Heart left ventricle (tissue), 16 donors: ENCODE measurements at regions of chr15 and their contacts with region 1.

Region 1: GRCh38 chr15:84600851-84601838 is at the start of gene ZSCAN2:
- DNase-seq: peak; percentile 95 to 97 (median 96)
- ATAC-seq: peak; percentile 98 to 99 (median 99)
- H3K4me3 ChIP-seq: peak within 1 kb of the TSS; percentile 47 to 97 (median 90)
- H3K27ac ChIP-seq: peak within 1 kb of the TSS in 11 of 12 donors; percentile 45 to 83 (median 72)
- H3K4me1 ChIP-seq: peaks cover 0 to 46% (median 9%) of the 10 kb centered on the region in 12 donors
- H3K27me3 ChIP-seq: no peaks in the 10 kb centered on the region
- CTCF ChIP-seq: no peak
- POLR2A ChIP-seq: peak in 1 of 2 donors; percentile 56
- total RNA-seq, gene ZSCAN2: 4.6 to 10.6 (median 6.3) TPM

Region 2: GRCh38 chr15:84633311-84634227 is 32.4 kb after region 1 on chr15:
- intact Hi-C with region 1: loop called in 6 of 10 experiments (anchors 1 to 5 kb)
- DNase-seq: peak; percentile 69 to 90 (median 80)
- ATAC-seq: peak; percentile 22 to 81 (median 61)
- H3K4me3 ChIP-seq: peak overlapping the region; percentile 53 to 85 (median 77)
- H3K27ac ChIP-seq: peak overlapping the region; percentile 91 to 99 (median 98)
- H3K4me1 ChIP-seq: peaks cover 3 to 54% (median 33%) of the 10 kb centered on the region in 12 donors
- H3K27me3 ChIP-seq: no peaks in the 10 kb centered on the region
- CTCF ChIP-seq: peak in 1 of 12 donors; percentile 9
- POLR2A ChIP-seq: peak in 1 of 2 donors; percentile 43

Region 3: DNA sequence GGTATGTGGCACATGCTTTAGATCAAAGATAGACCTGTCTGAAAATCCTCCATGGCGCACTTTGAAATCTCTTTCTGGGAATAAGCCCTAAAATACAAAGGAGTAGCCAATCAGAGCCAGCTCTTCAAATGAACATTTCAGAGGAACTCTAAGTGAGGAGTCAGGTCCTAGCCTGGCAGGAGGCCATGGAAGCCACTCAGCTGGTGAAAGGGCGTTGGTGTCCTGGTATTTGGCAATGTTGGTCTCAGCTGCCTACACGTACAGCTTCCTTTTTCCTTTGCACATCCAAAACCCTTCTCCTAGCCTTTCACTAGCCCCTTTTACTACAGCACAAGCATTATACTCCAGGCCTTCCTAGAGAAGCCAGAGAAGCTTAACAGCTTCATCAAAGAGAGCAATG is 47.4 kb after region 1 on chr15:
- intact Hi-C with region 1: loop called in 3 of 10 experiments (anchors 5 kb)
- DNase-seq: peak in 4 of 5 donors; percentile 33 to 80 (median 71)
- ATAC-seq: peak in 3 of 4 donors; percentile 48 to 56 (median 54)
- H3K4me3 ChIP-seq: no peak overlapping the region
- H3K27ac ChIP-seq: peak overlapping the region in 7 of 12 donors; percentile 5 to 53 (median 20)
- H3K4me1 ChIP-seq: peaks cover 0 to 47% (median 33%) of the 10 kb centered on the region in 12 donors
- H3K27me3 ChIP-seq: no peaks in the 10 kb centered on the region
- CTCF ChIP-seq: no peak
- POLR2A ChIP-seq: no peak

Region 4: GRCh38 chr15:84716036-84716799 is 115.1 kb after region 1 on chr15 and contains the start of gene SEC11A:
- intact Hi-C with region 1: loop called in 1 of 10 experiments (anchors 1 kb)
- DNase-seq: peak; percentile 95 to 98 (median 96)
- ATAC-seq: peak; percentile 98 to 99 (median 98)
- H3K4me3 ChIP-seq: peak within 1 kb of the TSS; percentile 58 to 98 (median 82)
- H3K27ac ChIP-seq: peak within 1 kb of the TSS; percentile 86 to 99 (median 94)
- H3K4me1 ChIP-seq: peaks cover 8 to 52% (median 25%) of the 10 kb centered on the region in 12 donors
- H3K27me3 ChIP-seq: no peaks in the 10 kb centered on the region
- CTCF ChIP-seq: no peak
- POLR2A ChIP-seq: peak in 1 of 2 donors; percentile 76
- total RNA-seq, gene SEC11A: 55.7 to 95.7 (median 73.0) TPM

Region 5: DNA sequence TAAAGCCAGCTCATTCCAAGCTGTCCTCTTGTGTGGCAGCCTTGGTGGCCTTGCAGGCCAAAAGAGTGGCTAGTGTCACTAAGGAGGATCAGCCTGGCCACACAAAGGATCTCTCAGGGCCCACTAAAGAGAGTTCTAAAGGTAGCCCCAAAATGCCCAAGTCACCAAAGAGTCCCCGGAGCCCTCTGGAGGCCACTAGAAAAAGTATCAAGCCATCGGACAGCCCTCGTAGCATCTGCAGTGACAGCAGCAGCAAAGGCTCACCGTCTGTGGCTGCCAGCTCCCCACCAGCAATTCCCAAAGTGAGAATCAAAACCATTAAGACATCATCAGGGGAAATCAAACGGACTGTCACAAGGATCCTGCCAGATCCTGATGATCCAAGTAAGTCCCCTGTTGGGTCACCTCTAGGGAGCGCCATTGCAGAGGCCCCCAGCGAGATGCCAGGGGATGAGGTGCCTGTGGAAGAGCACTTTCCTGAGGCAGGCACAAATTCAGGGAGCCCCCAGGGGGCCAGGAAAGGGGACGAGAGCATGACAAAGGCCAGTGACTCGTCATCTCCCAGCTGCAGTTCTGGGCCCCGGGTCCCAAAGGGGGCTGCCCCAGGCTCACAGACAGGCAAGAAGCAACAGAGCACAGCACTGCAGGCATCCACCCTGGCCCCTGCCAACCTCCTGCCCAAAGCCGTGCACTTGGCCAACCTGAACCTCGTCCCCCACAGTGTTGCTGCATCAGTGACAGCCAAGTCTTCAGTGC is 182.5 kb after region 1 on chr15:
- intact Hi-C with region 1: loop called in 1 of 10 experiments (anchors 10 kb)
- DNase-seq: no peak
- ATAC-seq: no peak
- H3K4me3 ChIP-seq: no peak overlapping the region
- H3K27ac ChIP-seq: no peak overlapping the region
- H3K4me1 ChIP-seq: peaks cover 3 to 55% (median 35%) of the 10 kb centered on the region in 12 donors
- H3K27me3 ChIP-seq: no peaks in the 10 kb centered on the region
- CTCF ChIP-seq: no peak
- POLR2A ChIP-seq: no peak

Region 6: GRCh38 chr15:84818261-84819131 is 217.4 kb after region 1 on chr15:
- intact Hi-C with region 1: loop called in 2 of 10 experiments (anchors 5 to 10 kb)
- DNase-seq: peak in 4 of 5 donors; percentile 62 to 77 (median 66)
- ATAC-seq: peak; percentile 3 to 46 (median 24)
- H3K4me3 ChIP-seq: peak overlapping the region; percentile 35 to 93 (median 72)
- H3K27ac ChIP-seq: peak overlapping the region; percentile 93 to 99 (median 96)
- H3K4me1 ChIP-seq: peaks cover 11 to 78% (median 68%) of the 10 kb centered on the region in 12 donors
- H3K27me3 ChIP-seq: no peaks in the 10 kb centered on the region
- CTCF ChIP-seq: peak in 3 of 12 donors; percentile 28 to 35 (median 29)
- POLR2A ChIP-seq: no peak

Region 7: GRCh38 chr15:84871428-84872305 is 270.5 kb after region 1 on chr15:
- intact Hi-C with region 1: loop called in 1 of 10 experiments (anchors 5 kb)
- DNase-seq: no peak
- ATAC-seq: peak; percentile 13 to 21 (median 15)
- H3K4me3 ChIP-seq: no peak overlapping the region
- H3K27ac ChIP-seq: peak overlapping the region in 1 of 12 donors; percentile 17
- H3K4me1 ChIP-seq: peaks cover 0 to 12% (median 0%) of the 10 kb centered on the region in 12 donors
- H3K27me3 ChIP-seq: no peaks in the 10 kb centered on the region
- CTCF ChIP-seq: peak in 3 of 12 donors; percentile 4 to 16 (median 16)
- POLR2A ChIP-seq: no peak